Activated CD8-positive, alpha-beta memory T cell treated with anti-CD3 and anti-CD28 coated beads, Interleukin-2, amount 10 ng/mL, durations not matched to agents 7 days and 5 days (primary cell): ENCODE measurements at regions of chr11 and their contacts with region 1.

Region 1: DNA sequence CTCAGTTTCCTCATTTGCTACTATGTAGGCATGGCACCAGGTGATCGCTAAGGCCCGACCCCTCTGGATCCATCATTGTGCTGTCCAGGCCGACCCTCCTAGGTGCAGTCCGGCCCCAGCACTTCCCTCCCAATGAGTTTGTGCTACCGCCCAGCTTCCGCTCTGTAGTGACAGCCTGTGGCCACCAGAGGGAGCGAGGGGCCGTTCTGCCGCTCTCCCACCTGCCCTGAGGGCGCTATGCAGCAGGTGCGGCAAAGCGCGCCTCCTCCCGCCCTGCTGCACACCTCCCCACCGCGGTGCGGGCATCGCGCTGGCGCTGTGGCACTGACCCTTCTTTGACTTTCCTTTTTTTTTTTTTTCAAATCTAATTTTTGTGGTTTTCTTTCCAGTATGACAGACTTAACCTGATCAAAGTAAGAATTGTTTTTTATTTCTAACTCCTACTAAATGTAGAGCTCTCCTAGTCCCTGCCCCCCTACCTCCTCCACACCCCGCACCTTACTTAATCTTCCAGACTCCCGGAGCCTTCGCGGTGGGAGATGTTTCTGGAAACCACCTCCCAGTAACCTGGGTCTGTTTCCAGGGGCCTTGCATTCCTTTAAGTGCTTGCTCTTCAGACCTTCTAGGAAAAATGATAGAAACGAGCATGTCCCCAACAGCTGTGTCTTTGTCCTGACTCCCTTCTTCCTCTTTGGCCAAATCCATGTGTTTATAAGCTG is 73.7 kb downstream of the SCN3B start:
- DNase-seq: peak; percentile 77
- ATAC-seq: peak; percentile 82
- H3K4me3 Mint-ChIP-seq: no peak overlapping the region
- H3K27ac Mint-ChIP-seq: no peak overlapping the region
- H3K4me1 Mint-ChIP-seq: peaks cover 31% of the 10 kb centered on the region
- H3K27me3 Mint-ChIP-seq: no peaks in the 10 kb centered on the region

Region 2: DNA sequence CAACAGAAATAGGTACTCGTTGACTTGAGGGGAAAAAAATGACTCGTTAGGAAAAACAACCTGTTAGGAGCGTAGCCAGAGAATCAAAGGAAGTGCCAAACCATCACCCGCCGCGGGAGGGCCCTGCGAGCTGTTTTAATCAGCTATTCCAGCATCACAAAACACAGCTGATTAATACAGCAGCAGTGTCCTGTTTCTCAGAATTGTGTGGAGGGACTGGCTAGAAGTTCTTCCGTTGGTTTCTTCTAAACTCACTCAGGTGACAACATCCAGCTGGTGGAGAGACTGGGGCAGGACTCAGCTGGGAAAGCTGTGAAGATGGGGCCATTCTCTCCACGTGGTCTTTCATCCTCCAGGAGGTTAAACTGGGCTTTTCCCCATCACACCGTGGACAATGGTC is 546.8 kb before region 1 on chr11:
- CTCF ChIA-PET with region 1: no interaction called
- DNase-seq: no peak
- ATAC-seq: peak; percentile 12
- H3K4me3 Mint-ChIP-seq: no peak overlapping the region
- H3K27ac Mint-ChIP-seq: no peak overlapping the region
- H3K4me1 Mint-ChIP-seq: peaks cover 13% of the 10 kb centered on the region
- H3K27me3 Mint-ChIP-seq: no peaks in the 10 kb centered on the region

Region 3: GRCh38 chr11:123511037-123511870 is 69.5 kb before region 1 on chr11:
- CTCF ChIA-PET with region 1: interaction called, 11 read pairs
- DNase-seq: peak; percentile 78
- ATAC-seq: peak; percentile 90
- H3K4me3 Mint-ChIP-seq: no peak overlapping the region
- H3K27ac Mint-ChIP-seq: no peak overlapping the region
- H3K4me1 Mint-ChIP-seq: peaks cover 43% of the 10 kb centered on the region
- H3K27me3 Mint-ChIP-seq: no peaks in the 10 kb centered on the region

Region 4: GRCh38 chr11:123560006-123560405 is 20.7 kb before region 1 on chr11:
- CTCF ChIA-PET with region 1: interaction called, 25 read pairs
- DNase-seq: no peak
- ATAC-seq: no peak
- H3K4me3 Mint-ChIP-seq: no peak overlapping the region
- H3K27ac Mint-ChIP-seq: no peak overlapping the region
- H3K4me1 Mint-ChIP-seq: peaks cover 9% of the 10 kb centered on the region
- H3K27me3 Mint-ChIP-seq: no peaks in the 10 kb centered on the region